CD4-positive, alpha-beta T cell (primary cell): ENCODE measurements at regions of chr19 and their contacts with region 1.

Region 1: GRCh38 chr19:18419195-18419698 is at the start of gene SSBP4:
- DNase-seq: peak in 13 of 14 experiments; percentile 45 to 90 (median 63)
- ATAC-seq: peak; percentile 58
- H3K4me3 ChIP-seq: peak within 1 kb of the TSS; percentile 77
- H3K4me3 Mint-ChIP-seq: peak within 1 kb of the TSS; percentile 92
- H3K27ac ChIP-seq: peak within 1 kb of the TSS; percentile 41 to 52
- H3K27ac Mint-ChIP-seq: peak within 1 kb of the TSS; percentile 81
- H3K4me1 ChIP-seq: peaks cover 94% of the 10 kb centered on the region
- H3K4me1 Mint-ChIP-seq: peaks cover 85% of the 10 kb centered on the region
- H3K27me3 ChIP-seq: peaks cover 11 to 30% of the 10 kb centered on the region in 2 experiments
- H3K27me3 Mint-ChIP-seq: peaks cover 38% of the 10 kb centered on the region
- CTCF ChIP-seq: no peak
- total RNA-seq, gene SSBP4: 44.0 to 50.9 TPM

Region 2: DNA sequence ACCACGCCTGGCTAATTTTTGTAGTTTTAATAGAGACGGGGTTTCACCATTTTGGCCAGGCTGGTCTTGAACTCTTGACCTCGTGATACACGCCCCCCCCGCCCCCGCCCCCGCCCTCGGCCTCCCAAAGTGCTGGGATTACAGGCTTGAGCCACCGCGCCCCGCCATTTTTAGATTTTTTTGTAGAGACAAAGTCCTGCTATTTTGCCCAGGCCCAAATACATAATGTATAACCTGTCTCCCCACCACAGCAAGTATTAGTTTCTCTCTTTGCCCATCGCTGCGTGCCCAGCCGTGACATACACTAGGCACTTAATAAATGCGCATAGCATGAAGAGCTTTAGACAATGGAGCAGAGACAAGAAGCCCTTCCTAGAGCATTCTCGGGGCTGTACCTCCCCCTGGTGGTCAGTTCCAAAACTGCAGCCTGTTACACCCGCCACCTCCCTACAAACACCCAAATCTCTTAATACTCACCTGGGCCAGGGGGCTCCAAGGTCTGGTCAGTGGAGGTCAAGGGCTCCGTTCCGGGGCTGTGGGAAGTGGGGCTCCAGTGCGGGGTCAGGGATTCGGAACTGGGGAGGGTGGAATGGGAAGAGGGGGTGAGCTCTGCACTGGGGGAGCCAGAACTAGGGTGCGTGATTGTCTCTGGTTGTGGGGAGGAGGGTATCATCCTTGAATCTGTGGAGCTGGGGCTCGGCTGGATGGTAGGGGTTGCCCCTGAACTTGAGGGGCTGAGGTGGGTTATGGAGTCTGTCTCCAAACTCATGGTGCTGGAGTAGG is 167.5 kb before region 1 on chr19:
- CTCF ChIA-PET with region 1: no interaction called
- POLR2A ChIA-PET with region 1: no interaction called
- intact Hi-C with region 1: loop called in 1 of 2 experiments (anchors 5 kb)
- DNase-seq: peak; percentile 65 to 90 (median 81)
- ATAC-seq: peak; percentile 91
- H3K4me3 ChIP-seq: no peak overlapping the region
- H3K4me3 Mint-ChIP-seq: no peak overlapping the region
- H3K27ac ChIP-seq: no peak overlapping the region
- H3K27ac Mint-ChIP-seq: no peak overlapping the region
- H3K4me1 ChIP-seq: peaks cover 8% of the 10 kb centered on the region
- H3K4me1 Mint-ChIP-seq: no peaks in the 10 kb centered on the region
- H3K27me3 ChIP-seq: peaks cover 8 to 12% of the 10 kb centered on the region in 2 experiments
- H3K27me3 Mint-ChIP-seq: peaks cover 31% of the 10 kb centered on the region
- CTCF ChIP-seq: peak; percentile 80

Region 3: GRCh38 chr19:18328340-18329034 is 90.8 kb before region 1 on chr19:
- CTCF ChIA-PET with region 1: interaction called, 3 read pairs
- POLR2A ChIA-PET with region 1: no interaction called
- intact Hi-C with region 1: loop called in 1 of 2 experiments (anchors 5 kb)
- DNase-seq: peak; percentile 76 to 94 (median 82)
- ATAC-seq: peak; percentile 99
- H3K4me3 ChIP-seq: peak overlapping the region; percentile 31
- H3K4me3 Mint-ChIP-seq: peak overlapping the region; percentile 47
- H3K27ac ChIP-seq: no peak overlapping the region
- H3K27ac Mint-ChIP-seq: peak overlapping the region; percentile 6
- H3K4me1 ChIP-seq: peaks cover 24% of the 10 kb centered on the region
- H3K4me1 Mint-ChIP-seq: peaks cover 17% of the 10 kb centered on the region
- H3K27me3 ChIP-seq: no peaks in the 10 kb centered on the region
- H3K27me3 Mint-ChIP-seq: no peaks in the 10 kb centered on the region
- CTCF ChIP-seq: peak; percentile 92

Region 4: GRCh38 chr19:18340190-18340989 is 78.9 kb before region 1 on chr19 and contains the start of gene PGPEP1:
- CTCF ChIA-PET with region 1: no interaction called
- POLR2A ChIA-PET with region 1: no interaction called
- intact Hi-C with region 1: loop called in 1 of 2 experiments (anchors 5 kb)
- DNase-seq: peak in 11 of 14 experiments; percentile 27 to 81 (median 68)
- ATAC-seq: peak; percentile 41
- H3K4me3 ChIP-seq: peak within 1 kb of the TSS; percentile 82
- H3K4me3 Mint-ChIP-seq: peak within 1 kb of the TSS; percentile 89
- H3K27ac ChIP-seq: peak within 1 kb of the TSS; percentile 45 to 49
- H3K27ac Mint-ChIP-seq: peak within 1 kb of the TSS; percentile 77
- H3K4me1 ChIP-seq: peaks cover 21% of the 10 kb centered on the region
- H3K4me1 Mint-ChIP-seq: peaks cover 15% of the 10 kb centered on the region
- H3K27me3 ChIP-seq: no peaks in the 10 kb centered on the region
- H3K27me3 Mint-ChIP-seq: no peaks in the 10 kb centered on the region
- CTCF ChIP-seq: no peak
- total RNA-seq, gene PGPEP1: 24.4 to 25.9 TPM

Region 5: DNA sequence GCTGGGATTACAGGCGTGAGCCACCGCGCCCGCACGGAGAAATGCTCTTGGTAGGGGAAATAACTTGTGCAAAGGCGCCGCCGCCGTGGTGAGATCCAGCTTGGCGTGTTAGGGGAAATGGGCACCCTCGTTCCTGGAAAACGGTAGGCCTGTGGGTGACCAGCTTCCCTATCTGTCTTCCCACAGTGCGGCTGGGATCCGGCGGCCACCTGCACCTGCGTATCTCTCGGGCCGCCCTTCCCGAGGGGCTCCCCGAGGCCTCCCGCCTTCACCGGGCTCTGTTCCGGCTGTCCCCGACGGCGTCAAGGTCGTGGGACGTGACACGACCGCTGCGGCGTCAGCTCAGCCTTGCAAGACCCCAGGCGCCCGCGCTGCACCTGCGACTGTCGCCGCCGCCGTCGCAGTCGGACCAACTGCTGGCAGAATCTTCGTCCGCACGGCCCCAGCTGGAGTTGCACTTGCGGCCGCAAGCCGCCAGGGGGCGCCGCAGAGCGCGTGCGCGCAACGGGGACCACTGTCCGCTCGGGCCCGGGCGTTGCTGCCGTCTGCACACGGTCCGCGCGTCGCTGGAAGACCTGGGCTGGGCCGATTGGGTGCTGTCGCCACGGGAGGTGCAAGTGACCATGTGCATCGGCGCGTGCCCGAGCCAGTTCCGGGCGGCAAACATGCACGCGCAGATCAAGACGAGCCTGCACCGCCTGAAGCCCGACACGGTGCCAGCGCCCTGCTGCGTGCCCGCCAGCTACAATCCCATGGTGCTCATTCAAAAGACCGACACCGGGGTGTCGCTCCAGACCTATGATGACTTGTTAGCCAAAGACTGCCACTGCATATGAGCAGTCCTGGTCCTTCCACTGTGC is 30.9 kb before region 1 on chr19:
- CTCF ChIA-PET with region 1: interaction called, 53 read pairs
- POLR2A ChIA-PET with region 1: interaction called, 8 read pairs
- intact Hi-C with region 1: no loop called
- DNase-seq: peak; percentile 51 to 89 (median 72)
- ATAC-seq: peak; percentile 85
- H3K4me3 ChIP-seq: peak overlapping the region; percentile 47
- H3K4me3 Mint-ChIP-seq: peak overlapping the region; percentile 72
- H3K27ac ChIP-seq: no peak overlapping the region
- H3K27ac Mint-ChIP-seq: no peak overlapping the region
- H3K4me1 ChIP-seq: peaks cover 14% of the 10 kb centered on the region
- H3K4me1 Mint-ChIP-seq: peaks cover 12% of the 10 kb centered on the region
- H3K27me3 ChIP-seq: peaks cover 42 to 43% of the 10 kb centered on the region in 2 experiments
- H3K27me3 Mint-ChIP-seq: peaks cover 66% of the 10 kb centered on the region
- CTCF ChIP-seq: peak; percentile 100

Region 6: GRCh38 chr19:18440415-18440877 is 21.2 kb after region 1 on chr19:
- CTCF ChIA-PET with region 1: interaction called, 10 read pairs
- POLR2A ChIA-PET with region 1: interaction called, 20 read pairs
- intact Hi-C with region 1: no loop called
- DNase-seq: peak in 6 of 14 experiments; percentile 31 to 75 (median 41)
- ATAC-seq: peak; percentile 22
- H3K4me3 ChIP-seq: no peak overlapping the region
- H3K4me3 Mint-ChIP-seq: peak overlapping the region; percentile 57
- H3K27ac ChIP-seq: no peak overlapping the region
- H3K27ac Mint-ChIP-seq: peak overlapping the region; percentile 81
- H3K4me1 ChIP-seq: peaks cover 48% of the 10 kb centered on the region
- H3K4me1 Mint-ChIP-seq: peaks cover 31% of the 10 kb centered on the region
- H3K27me3 ChIP-seq: no peaks in the 10 kb centered on the region
- H3K27me3 Mint-ChIP-seq: no peaks in the 10 kb centered on the region
- CTCF ChIP-seq: no peak